PC-3 (cell line): ENCODE measurements at regions of chr12 and their contacts with region 1.

Region 1: DNA sequence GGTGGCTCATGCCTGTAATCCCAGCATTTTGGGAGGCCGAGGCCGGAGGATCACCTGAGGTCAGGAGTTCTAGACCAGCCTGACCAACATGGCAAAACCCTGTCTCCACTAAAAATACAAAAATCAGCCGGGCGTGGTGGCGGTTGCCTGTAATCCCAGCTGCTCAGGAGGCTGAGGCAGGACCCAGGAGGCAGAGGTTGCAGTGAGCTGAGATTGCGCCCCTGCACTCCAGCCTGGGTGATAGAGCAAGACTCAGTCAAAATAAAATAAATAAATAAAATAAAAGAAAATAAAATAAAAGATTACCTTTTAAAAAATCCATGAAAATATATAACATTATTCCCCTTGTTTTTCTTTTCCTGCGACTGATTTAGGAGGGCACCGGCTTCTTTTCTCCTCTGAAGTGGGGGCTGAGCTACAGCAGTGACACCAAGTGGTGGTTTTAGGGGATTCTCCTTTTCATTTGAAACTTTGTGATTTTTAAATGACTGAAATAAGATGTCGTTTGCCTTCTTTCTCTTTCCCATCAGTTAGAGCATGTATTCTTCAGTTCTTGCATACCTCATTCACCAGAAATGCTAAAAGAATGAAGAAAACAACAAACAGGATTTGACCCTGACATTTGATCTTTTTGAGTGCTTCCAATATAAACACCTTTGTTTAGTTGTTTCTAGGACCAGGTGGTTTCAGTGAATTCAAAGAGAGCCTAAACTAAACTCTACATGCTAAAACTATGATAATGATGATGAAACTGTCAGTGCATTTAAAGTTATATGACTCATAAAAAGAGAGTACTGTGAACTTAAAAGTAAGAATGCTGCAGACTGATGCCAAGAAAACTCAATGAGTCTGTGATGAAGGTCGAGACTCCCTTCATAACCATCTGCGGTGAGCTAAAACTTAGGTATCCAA is 22.6 kb upstream of the PKP2 start:
- DNase-seq: peak; percentile 72
- ATAC-seq: peak; percentile 17
- H3K4me3 ChIP-seq: no peak overlapping the region
- H3K27ac ChIP-seq: peak overlapping the region; percentile 97
- H3K4me1 ChIP-seq: peaks cover 48% of the 10 kb centered on the region
- H3K27me3 ChIP-seq: no peaks in the 10 kb centered on the region
- CTCF ChIP-seq: peak; percentile 54

Region 2: GRCh38 chr12:32777159-32777558 is 142.0 kb before region 1 on chr12:
- CTCF ChIA-PET with region 1: no interaction called
- POLR2A ChIA-PET with region 1: no interaction called
- intact Hi-C with region 1: loop called (anchors 5 kb)
- DNase-seq: no peak
- ATAC-seq: no peak
- H3K4me3 ChIP-seq: no peak overlapping the region
- H3K27ac ChIP-seq: no peak overlapping the region
- H3K4me1 ChIP-seq: peaks cover 28% of the 10 kb centered on the region
- H3K27me3 ChIP-seq: no peaks in the 10 kb centered on the region
- CTCF ChIP-seq: no peak

Region 3: GRCh38 chr12:32864731-32865130 is 54.4 kb before region 1 on chr12:
- CTCF ChIA-PET with region 1: no interaction called
- POLR2A ChIA-PET with region 1: interaction called, 5 read pairs
- intact Hi-C with region 1: loop called (anchors 2 kb)
- DNase-seq: peak; percentile 66
- ATAC-seq: peak; percentile 65
- H3K4me3 ChIP-seq: no peak overlapping the region
- H3K27ac ChIP-seq: peak overlapping the region; percentile 51
- H3K4me1 ChIP-seq: peaks cover 13% of the 10 kb centered on the region; the same call in 1 of the 2 replicates
- H3K27me3 ChIP-seq: no peaks in the 10 kb centered on the region
- CTCF ChIP-seq: no peak

Region 4: GRCh38 chr12:32877601-32878459 is 41.3 kb before region 1 on chr12:
- CTCF ChIA-PET with region 1: no interaction called
- POLR2A ChIA-PET with region 1: no interaction called
- intact Hi-C with region 1: no loop called
- DNase-seq: no peak
- ATAC-seq: no peak
- H3K4me3 ChIP-seq: no peak overlapping the region
- H3K27ac ChIP-seq: peak overlapping the region; percentile 34
- H3K4me1 ChIP-seq: no peaks in the 10 kb centered on the region
- H3K27me3 ChIP-seq: no peaks in the 10 kb centered on the region
- CTCF ChIP-seq: no peak

Region 5: GRCh38 chr12:32896432-32897273 is 22.5 kb before region 1 on chr12 and contains the start of gene PKP2:
- CTCF ChIA-PET with region 1: interaction called, 3 read pairs
- POLR2A ChIA-PET with region 1: interaction called, 11 read pairs
- intact Hi-C with region 1: loop called (anchors 1 kb)
- DNase-seq: peak; percentile 93
- ATAC-seq: peak; percentile 83
- H3K4me3 ChIP-seq: peak within 1 kb of the TSS; percentile 73
- H3K27ac ChIP-seq: peak within 1 kb of the TSS; percentile 74
- H3K4me1 ChIP-seq: peaks cover 27% of the 10 kb centered on the region
- H3K27me3 ChIP-seq: no peaks in the 10 kb centered on the region
- CTCF ChIP-seq: no peak
- total RNA-seq, gene PKP2: 12.7 TPM in 2 replicates

Region 6: DNA sequence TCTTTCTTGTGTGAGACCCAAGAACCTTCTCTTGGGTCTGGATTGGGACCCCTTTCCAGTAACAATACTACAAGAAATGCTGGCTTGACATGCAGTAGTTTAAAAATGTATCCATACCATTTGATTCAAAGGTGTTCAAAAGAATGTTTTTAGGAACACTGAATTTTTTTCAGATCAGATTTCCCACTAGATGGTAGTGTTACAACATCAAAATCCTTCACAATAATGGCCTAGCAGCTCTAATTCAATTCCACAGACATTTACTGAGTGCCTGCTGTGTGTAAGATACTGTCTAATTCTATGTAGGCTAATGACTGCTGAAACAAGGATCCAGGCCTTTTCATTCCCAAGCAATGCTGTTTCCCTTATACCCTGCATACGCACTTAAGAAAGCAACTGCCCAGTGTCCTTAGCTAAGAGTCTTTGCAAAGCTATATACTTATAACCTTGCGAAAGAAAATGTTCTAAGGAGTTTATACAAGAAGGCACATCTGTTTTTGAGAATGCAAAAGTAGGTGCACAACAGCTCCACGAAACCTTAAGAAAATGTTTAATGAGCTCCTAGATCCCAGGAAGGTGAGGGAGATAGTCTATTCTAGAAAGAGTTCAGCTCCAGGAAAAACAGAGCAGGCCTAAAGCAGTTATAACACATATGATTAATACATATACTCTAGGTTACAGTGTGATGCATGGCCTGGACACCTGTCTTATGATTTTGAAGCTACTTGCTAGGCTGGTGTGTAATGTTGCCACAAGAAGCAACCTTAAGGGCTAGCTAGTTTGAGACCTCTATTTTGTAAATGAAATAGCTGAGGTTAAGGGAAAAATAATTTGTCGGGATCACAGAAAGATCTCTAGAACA is 28.3 kb after region 1 on chr12:
- CTCF ChIA-PET with region 1: no interaction called
- POLR2A ChIA-PET with region 1: no interaction called
- intact Hi-C with region 1: loop called (anchors 2 kb)
- DNase-seq: peak; percentile 72
- ATAC-seq: peak; percentile 59
- H3K4me3 ChIP-seq: no peak overlapping the region
- H3K27ac ChIP-seq: no peak overlapping the region
- H3K4me1 ChIP-seq: peaks cover 13% of the 10 kb centered on the region
- H3K27me3 ChIP-seq: no peaks in the 10 kb centered on the region
- CTCF ChIP-seq: peak; percentile 61

Region 7: GRCh38 chr12:33205981-33206380 is 286.8 kb after region 1 on chr12:
- CTCF ChIA-PET with region 1: no interaction called
- POLR2A ChIA-PET with region 1: no interaction called
- intact Hi-C with region 1: loop called (anchors 1 kb)
- DNase-seq: peak; percentile 56
- ATAC-seq: peak; percentile 87
- H3K4me3 ChIP-seq: peak overlapping the region; percentile 43; the same call in 1 of the 2 replicates
- H3K27ac ChIP-seq: peak overlapping the region; percentile 51
- H3K4me1 ChIP-seq: peaks cover 15% of the 10 kb centered on the region
- H3K27me3 ChIP-seq: no peaks in the 10 kb centered on the region
- CTCF ChIP-seq: no peak

Region 8: GRCh38 chr12:33310471-33310870 is 391.3 kb after region 1 on chr12:
- CTCF ChIA-PET with region 1: no interaction called
- POLR2A ChIA-PET with region 1: no interaction called
- intact Hi-C with region 1: no loop called
- DNase-seq: no peak
- ATAC-seq: no peak
- H3K4me3 ChIP-seq: no peak overlapping the region
- H3K27ac ChIP-seq: no peak overlapping the region
- H3K4me1 ChIP-seq: no peaks in the 10 kb centered on the region
- H3K27me3 ChIP-seq: no peaks in the 10 kb centered on the region
- CTCF ChIP-seq: no peak

Region 9: DNA sequence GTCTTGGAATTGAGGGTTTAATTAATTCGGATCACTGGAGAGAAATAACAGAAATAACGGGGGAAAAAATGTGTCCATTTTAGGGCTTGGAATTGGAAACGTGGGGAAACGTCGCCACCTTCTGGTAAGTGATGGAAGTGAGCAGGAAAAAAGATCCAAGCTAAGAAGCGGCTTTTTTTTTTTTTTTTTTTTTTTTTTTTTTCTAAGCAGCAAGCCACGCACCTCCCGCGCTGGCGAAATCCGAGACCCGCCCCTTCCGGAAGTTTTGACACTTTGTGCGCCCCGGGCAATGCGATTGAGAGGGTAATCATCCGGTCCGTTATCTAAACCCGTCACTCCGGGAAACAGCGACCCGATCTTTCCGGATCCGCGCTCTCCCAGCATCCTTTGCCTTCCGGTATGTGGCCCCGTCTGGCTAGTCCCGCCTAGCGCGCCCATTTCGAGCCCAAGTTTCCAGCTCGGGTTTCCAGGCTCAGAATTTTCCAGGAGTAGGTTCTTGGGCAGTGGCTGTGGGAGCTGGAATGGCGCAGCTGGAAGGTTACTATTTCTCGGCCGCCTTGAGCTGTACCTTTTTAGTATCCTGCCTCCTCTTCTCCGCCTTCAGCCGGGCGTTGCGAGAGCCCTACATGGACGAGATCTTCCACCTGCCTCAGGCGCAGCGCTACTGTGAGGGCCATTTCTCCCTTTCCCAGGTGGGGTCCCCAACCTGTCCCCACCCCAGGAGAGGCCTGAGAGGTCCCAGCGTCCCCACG is 1103.1 kb after region 1 on chr12 and contains the start of gene ALG10:
- CTCF ChIA-PET with region 1: no interaction called
- POLR2A ChIA-PET with region 1: interaction called, 23 read pairs
- intact Hi-C with region 1: no loop called
- DNase-seq: peak; percentile 98
- ATAC-seq: peak; percentile 99
- H3K4me3 ChIP-seq: peak within 1 kb of the TSS; percentile 98
- H3K27ac ChIP-seq: peak within 1 kb of the TSS; percentile 57
- H3K4me1 ChIP-seq: peaks cover 12% of the 10 kb centered on the region; the same call in 1 of the 2 replicates
- H3K27me3 ChIP-seq: no peaks in the 10 kb centered on the region
- CTCF ChIP-seq: peak; percentile 69
- total RNA-seq, gene ALG10: 15.7 TPM in 2 replicates